RWPE1 (cell line): ENCODE measurements at regions of chr2 and their contacts with region 1.

Region 1: GRCh38 chr2:85302121-85302520 is 25.7 kb downstream of the TGOLN2 start:
- DNase-seq: no peak
- H3K27ac ChIP-seq: peak overlapping the region; percentile 31; the same call in 1 of the 2 replicates
- CTCF ChIP-seq: no peak

Region 2: GRCh38 chr2:85009019-85009618 is 293.0 kb before region 1 on chr2:
- CTCF ChIA-PET with region 1: no interaction called
- POLR2A ChIA-PET with region 1: no interaction called
- DNase-seq: no peak
- H3K27ac ChIP-seq: no peak overlapping the region
- CTCF ChIP-seq: no peak

Region 3: DNA sequence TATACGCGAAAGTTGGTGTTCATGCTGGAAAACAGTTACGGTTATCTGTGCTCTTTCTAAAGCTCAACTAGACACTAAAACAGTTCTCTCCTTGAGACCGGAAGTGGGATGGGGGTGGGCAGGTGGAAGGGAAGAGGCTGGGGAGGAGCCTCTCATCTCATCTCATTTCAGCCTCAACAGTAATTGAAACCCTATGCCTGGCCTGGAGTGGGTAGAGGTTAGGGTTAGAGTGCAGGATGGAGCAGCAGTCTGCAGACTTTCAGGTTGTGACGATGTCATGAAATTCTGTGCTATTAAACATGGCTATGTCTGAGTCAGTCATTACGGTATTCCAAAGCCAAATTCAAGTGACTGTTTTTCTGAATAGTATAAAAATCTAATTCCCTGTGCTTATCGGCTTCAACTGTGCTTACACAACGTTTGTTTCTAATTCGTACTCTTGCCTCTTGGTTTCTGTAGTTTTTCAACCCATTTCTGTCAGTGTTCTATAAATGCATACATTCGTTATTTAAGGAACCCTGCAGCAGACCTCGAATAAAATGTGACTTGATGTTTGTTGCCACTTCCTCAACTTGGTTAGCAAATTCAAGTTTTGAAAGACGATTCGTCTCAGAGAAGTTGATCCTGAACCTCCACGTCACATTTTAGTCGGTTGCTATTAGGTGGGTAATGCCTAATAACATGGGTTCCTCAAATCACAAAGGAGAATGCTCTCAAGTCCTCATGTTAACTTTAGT is 244.7 kb before region 1 on chr2:
- CTCF ChIA-PET with region 1: interaction called, 10 read pairs
- POLR2A ChIA-PET with region 1: interaction called, 3 read pairs
- DNase-seq: no peak
- H3K27ac ChIP-seq: no peak overlapping the region
- CTCF ChIP-seq: no peak

Region 4: GRCh38 chr2:85066874-85067351 is 235.2 kb before region 1 on chr2:
- CTCF ChIA-PET with region 1: interaction called, 48 read pairs
- POLR2A ChIA-PET with region 1: no interaction called
- DNase-seq: peak; percentile 73
- H3K27ac ChIP-seq: peak overlapping the region; percentile 11; the same call in 1 of the 2 replicates
- CTCF ChIP-seq: peak; percentile 79

Region 5: GRCh38 chr2:85288244-85288725 is 13.8 kb before region 1 on chr2:
- CTCF ChIA-PET with region 1: interaction called, 13 read pairs
- POLR2A ChIA-PET with region 1: no interaction called
- DNase-seq: peak; percentile 98
- H3K27ac ChIP-seq: peak overlapping the region; percentile 93
- CTCF ChIP-seq: no peak

Region 6: DNA sequence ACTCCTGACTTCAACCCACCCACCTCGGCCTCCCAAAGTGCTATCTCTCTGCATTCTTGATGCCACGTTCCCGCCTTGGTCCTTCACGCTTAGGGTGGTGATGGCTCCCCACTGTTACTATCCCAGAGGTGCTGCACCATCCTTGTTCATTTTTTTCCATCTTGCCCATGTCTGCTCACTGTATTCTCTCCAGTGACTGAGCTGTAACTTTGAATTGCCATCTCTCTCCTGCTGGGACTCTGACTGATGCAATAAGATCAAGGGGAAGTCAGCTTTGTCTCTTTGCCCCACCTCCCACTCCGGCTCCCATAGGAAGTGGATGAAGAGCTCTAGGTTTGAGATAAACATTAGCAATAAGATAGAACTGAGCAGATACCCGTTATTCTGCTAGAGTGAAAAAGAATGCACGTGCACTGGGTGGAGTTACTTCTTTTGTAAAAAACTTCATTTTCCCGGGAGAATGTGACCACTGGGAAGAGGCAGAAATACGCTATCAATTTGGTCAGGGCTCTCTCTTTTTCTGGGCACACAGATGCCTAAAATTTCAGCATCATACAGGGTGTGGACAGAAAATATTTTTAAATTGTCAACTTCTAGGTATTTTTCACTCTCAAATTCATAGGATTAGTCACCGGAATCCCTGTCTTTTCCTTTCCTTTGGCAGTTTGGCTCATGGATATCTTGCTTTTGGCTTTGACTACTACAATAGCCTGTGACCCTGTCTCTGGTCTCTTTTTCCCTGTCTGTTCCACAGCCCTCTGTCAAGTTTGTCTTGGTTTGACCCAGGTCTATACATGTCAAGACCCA is 698.2 kb after region 1 on chr2:
- CTCF ChIA-PET with region 1: no interaction called
- POLR2A ChIA-PET with region 1: no interaction called
- DNase-seq: no peak
- H3K27ac ChIP-seq: no peak overlapping the region
- CTCF ChIP-seq: no peak